ENCODE measurements at regions of chr1 and their contacts with region 1.

Region 1: DNA sequence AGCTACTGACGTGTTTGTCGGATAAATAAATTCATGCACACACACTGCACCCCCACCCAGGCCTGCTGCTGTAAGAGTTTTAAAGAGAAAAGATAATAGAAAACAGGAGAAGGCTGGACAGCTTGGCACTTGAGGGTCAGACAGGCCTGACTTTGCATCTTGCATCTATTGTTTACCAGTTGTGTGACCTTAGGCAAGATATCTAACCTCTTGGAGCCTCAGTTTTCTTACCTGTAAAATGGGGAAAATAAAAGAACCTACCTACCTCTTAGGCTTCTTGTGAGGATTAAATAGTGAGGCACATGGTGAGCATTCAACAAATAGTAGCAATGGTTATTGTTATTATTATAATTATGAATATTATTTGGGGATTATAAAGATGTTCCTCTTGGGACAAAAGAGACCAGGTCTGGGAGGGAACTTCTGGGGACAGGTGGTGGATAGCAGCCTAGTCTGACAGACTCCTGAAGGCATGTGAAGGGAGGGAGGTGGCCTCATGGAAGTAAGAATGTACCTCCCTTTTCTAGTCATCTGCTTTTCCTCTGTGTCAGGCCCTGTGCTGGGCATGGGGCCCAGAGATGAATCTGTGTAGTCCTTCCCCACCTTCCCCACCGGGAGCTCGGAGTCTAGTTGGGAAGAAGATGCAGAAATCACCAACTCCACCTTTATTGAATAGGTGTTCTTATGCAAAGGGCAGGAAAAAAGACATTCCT is 18.3 kb upstream of the EPB41 start:
- DNase-seq: no peak

Region 2: DNA sequence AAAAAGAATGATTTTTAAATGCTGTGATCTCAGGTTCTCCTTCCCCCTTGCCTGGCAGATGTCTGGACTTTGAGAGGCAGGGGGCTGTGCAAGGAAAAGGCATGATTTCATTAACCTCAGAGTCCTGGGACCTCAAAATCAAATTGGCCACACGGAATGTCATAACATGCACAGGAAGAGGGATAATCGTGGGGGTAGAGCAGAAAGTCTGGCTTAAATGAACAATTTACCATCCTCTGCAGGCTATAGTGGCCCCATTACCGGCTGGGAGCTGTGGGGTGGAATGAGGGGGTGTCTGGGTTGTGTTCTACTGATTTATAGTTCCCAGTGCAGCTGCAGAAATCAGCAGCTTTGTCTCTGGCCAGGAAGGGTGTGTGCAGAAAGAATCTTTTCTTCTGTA is 73.3 kb before region 1 on chr1:
- intact Hi-C with region 1: no loop called
- DNase-seq: no peak

Region 3: GRCh38 chr1:28871631-28872401 is 24.2 kb before region 1 on chr1:
- intact Hi-C with region 1: loop called in 1 of 2 experiments (anchors 1 kb)
- DNase-seq: no peak

Region 4: GRCh38 chr1:30635391-30635975 is 1739.4 kb after region 1 on chr1:
- intact Hi-C with region 1: no loop called
- DNase-seq: peak; percentile 60

Measured in posterior vena cava (tissue), 2 donors.